BJ (cell line): ENCODE measurements at regions of chr12 and their contacts with region 1.

Region 1: GRCh38 chr12:96516472-96517430 is 27.4 kb downstream of the CFAP54 start:
- DNase-seq: peak; percentile 26
- H3K4me3 ChIP-seq: no peak overlapping the region
- H3K27me3 ChIP-seq: no peaks in the 10 kb centered on the region
- CTCF ChIP-seq: peak; percentile 48

Region 2: GRCh38 chr12:95918194-95918993 is 598.4 kb before region 1 on chr12:
- CTCF ChIA-PET with region 1: interaction called, 19 read pairs
- POLR2A ChIA-PET with region 1: no interaction called
- DNase-seq: no peak
- H3K4me3 ChIP-seq: no peak overlapping the region
- H3K27me3 ChIP-seq: 0 out of 2 replicates have a peak, but pooled peaks cover 2% of the 10 kb centered on the region
- CTCF ChIP-seq: peak; percentile 86

Region 3: GRCh38 chr12:96061864-96062453 is 454.8 kb before region 1 on chr12:
- CTCF ChIA-PET with region 1: interaction called, 72 read pairs
- POLR2A ChIA-PET with region 1: no interaction called
- DNase-seq: peak; percentile 28
- H3K4me3 ChIP-seq: no peak overlapping the region
- H3K27me3 ChIP-seq: no peaks in the 10 kb centered on the region
- CTCF ChIP-seq: peak; percentile 79

Region 4: GRCh38 chr12:96208801-96209549 is 307.8 kb before region 1 on chr12:
- CTCF ChIA-PET with region 1: interaction called, 11 read pairs
- POLR2A ChIA-PET with region 1: no interaction called
- DNase-seq: no peak
- H3K4me3 ChIP-seq: no peak overlapping the region
- H3K27me3 ChIP-seq: no peaks in the 10 kb centered on the region
- CTCF ChIP-seq: no peak

Region 5: GRCh38 chr12:96218989-96219678 is 297.6 kb before region 1 on chr12:
- CTCF ChIA-PET with region 1: interaction called, 19 read pairs
- POLR2A ChIA-PET with region 1: no interaction called
- DNase-seq: no peak
- H3K4me3 ChIP-seq: no peak overlapping the region
- H3K27me3 ChIP-seq: no peaks in the 10 kb centered on the region
- CTCF ChIP-seq: no peak

Region 6: GRCh38 chr12:96399919-96400797 is 116.6 kb before region 1 on chr12 and contains the start of gene CDK17:
- CTCF ChIA-PET with region 1: interaction called, 42 read pairs
- POLR2A ChIA-PET with region 1: no interaction called
- DNase-seq: no peak
- H3K4me3 ChIP-seq: peak within 1 kb of the TSS; percentile 80
- H3K27me3 ChIP-seq: no peaks in the 10 kb centered on the region
- CTCF ChIP-seq: peak; percentile 34; the same call in 1 of the 2 replicates
- polyA plus RNA-seq, gene CDK17: 14.8 and 32.8 TPM in 2 replicates

Region 7: DNA sequence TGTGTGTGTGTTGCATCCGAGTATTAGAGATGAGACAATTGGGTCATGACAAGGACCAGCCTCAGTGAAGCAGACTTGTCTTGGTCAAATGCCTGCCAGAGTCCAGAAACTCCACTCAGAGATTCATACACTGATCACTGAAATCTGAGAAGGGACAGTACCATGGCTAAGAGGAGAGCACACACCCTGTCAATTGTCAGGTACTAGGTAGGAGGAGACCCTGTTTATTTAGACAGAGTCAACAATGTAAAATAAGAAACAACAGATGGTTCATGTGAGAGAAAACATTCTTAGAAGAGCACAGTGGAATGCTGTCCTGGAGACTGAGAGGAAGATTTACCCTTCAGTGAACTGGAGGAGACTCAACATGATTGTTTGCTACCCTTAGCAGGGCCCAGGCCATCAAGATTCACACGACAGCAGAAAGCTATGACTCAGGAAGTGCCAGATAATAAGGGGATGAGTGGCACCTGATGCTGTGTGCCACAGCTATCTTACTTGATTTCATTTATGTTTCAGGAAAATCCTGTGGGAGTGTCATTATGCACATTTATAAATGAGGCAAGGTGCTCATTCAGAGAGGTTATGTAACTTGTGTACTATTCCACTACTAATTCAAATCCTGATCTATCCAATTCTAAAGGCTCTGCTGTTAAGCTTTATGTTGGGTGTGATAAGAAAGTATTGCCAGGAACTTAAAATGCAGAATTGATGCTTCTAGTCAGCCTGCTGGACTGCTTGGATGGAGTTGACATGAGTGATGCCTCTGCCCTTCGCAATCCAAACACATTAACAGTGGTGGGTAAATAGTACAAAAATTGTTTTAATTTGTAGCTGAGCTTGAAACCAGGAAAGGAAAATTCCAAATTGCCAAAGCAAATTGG is 253.7 kb after region 1 on chr12:
- CTCF ChIA-PET with region 1: no interaction called
- POLR2A ChIA-PET with region 1: no interaction called
- DNase-seq: no peak
- H3K4me3 ChIP-seq: no peak overlapping the region
- H3K27me3 ChIP-seq: no peaks in the 10 kb centered on the region
- CTCF ChIP-seq: no peak